CD4-positive, alpha-beta memory T cell (primary cell): ENCODE measurements at regions of chr16 and their contacts with region 1.

Region 1: GRCh38 chr16:66608241-66609138 is 4.0 kb downstream of the CMTM3 start:
- DNase-seq: peak; percentile 76 to 80 (median 76)
- H3K4me3 ChIP-seq: no peak overlapping the region
- H3K4me3 Mint-ChIP-seq: peak overlapping the region in 5 of 8 donors; percentile 36 to 77 (median 36)
- H3K27ac ChIP-seq: peak overlapping the region; percentile 48
- H3K27ac Mint-ChIP-seq: peak overlapping the region; percentile 10 to 83 (median 61)
- H3K4me1 ChIP-seq: peaks cover 42% of the 10 kb centered on the region
- H3K4me1 Mint-ChIP-seq: peaks cover 14 to 41% (median 29%) of the 10 kb centered on the region in 4 donors
- H3K27me3 ChIP-seq: no peaks in the 10 kb centered on the region
- H3K27me3 Mint-ChIP-seq: peaks cover 0 to 4% of the 10 kb centered on the region in 2 donors

Region 2: DNA sequence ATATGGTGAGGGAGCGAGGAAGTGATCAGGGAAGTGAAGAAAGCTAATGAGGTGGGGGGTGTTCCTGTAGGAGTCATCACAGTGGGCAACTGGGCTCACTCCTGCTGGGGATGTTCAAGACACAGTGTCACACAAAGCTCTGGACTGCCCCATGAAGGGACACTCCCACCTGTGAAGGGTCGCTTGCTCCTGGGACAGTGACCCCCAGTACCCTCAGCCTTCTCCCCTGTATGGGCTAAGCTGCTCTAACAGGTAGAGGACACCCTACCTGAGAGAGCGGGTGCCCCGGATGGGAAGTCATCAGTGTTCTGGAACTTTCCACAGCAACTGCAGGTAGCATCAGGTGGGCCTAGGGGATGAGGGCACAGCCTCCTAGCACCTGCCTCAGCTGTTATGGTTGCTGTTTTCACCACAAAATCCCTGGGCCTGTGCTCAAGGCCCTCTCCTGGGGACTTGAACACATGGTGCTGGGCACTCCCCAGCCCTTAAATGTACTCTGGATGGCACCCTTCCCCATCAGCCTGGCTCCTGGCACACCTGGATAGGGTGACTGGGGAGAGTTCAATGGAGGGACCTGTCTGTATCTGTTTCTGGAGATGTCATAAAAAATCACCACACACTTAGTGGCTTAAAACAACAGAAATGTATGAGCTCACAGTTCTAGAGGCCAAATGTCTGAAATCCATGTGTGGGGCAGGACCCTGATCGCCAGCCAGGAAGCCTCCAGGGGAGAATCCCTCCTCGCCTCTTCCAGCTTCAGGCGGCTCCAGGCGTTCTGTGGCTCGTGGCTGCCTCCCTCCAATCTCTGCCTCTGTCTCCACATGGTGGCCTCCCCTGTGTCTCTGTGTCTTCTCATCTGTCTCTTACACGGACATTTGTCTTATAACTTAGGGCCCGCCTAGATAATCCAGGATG is 346.0 kb before region 1 on chr16:
- CTCF ChIA-PET with region 1: no interaction called
- POLR2A ChIA-PET with region 1: no interaction called
- intact Hi-C with region 1: no loop called
- DNase-seq: no peak
- H3K4me3 ChIP-seq: no peak overlapping the region
- H3K4me3 Mint-ChIP-seq: no peak overlapping the region
- H3K27ac ChIP-seq: no peak overlapping the region
- H3K27ac Mint-ChIP-seq: peak overlapping the region in 1 of 7 donors; percentile 20
- H3K4me1 ChIP-seq: no peaks in the 10 kb centered on the region
- H3K4me1 Mint-ChIP-seq: peaks cover 0 to 9% (median 7%) of the 10 kb centered on the region in 4 donors
- H3K27me3 ChIP-seq: no peaks in the 10 kb centered on the region
- H3K27me3 Mint-ChIP-seq: peaks cover 26 to 29% of the 10 kb centered on the region in 2 donors

Region 3: GRCh38 chr16:66511615-66512500 is 96.6 kb before region 1 on chr16:
- CTCF ChIA-PET with region 1: interaction called, 13 read pairs
- POLR2A ChIA-PET with region 1: interaction called, 13 read pairs
- intact Hi-C with region 1: loop called (anchors 2 kb)
- DNase-seq: no peak
- H3K4me3 ChIP-seq: no peak overlapping the region
- H3K4me3 Mint-ChIP-seq: peak overlapping the region in 1 of 8 donors; percentile 50
- H3K27ac ChIP-seq: no peak overlapping the region
- H3K27ac Mint-ChIP-seq: peak overlapping the region in 5 of 7 donors; percentile 13 to 79 (median 30)
- H3K4me1 ChIP-seq: peaks cover 39% of the 10 kb centered on the region
- H3K4me1 Mint-ChIP-seq: peaks cover 23 to 51% (median 32%) of the 10 kb centered on the region in 4 donors
- H3K27me3 ChIP-seq: no peaks in the 10 kb centered on the region
- H3K27me3 Mint-ChIP-seq: no peaks in the 10 kb centered on the region

Region 4: DNA sequence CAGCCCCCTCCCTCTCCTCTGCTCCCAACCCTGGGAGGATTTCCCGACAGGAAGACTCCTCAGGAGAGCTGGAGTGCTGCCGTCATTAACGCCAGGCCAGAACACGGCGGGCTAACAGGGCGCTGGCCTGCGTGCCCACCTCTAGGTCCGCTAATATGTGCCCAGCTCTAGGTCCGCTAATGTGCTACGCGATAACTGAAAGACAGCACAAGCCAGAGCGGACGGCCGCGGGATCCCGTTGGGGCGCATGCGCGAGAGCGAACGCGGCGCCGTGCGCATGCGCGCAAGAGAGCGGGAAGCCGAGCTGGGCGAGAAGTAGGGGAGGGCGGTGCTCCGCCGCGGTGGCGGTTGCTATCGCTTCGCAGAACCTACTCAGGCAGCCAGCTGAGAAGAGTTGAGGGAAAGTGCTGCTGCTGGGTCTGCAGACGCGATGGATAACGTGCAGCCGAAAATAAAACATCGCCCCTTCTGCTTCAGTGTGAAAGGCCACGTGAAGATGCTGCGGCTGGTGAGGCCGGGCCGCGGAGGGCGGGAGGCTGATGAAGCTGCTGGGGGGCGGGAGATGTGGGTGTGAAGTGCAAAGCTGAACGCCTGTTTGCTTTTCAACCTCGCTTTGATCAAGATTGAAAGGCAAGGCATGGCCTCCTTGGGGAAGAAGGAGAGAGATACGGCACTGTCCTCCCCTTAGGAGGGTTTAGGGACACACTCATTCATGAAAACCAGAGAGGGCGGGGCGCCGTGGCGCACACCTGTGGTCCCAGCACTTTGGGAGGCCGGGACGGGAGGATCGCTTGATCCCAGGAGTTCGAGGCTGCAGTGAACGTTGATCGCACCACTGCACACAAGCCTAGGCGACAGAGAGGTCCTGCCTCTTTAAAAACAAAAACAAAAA is 56.0 kb before region 1 on chr16 and contains the start of gene CKLF:
- CTCF ChIA-PET with region 1: interaction called, 14 read pairs
- POLR2A ChIA-PET with region 1: interaction called, 101 read pairs
- intact Hi-C with region 1: loop called (anchors 2 kb)
- DNase-seq: peak; percentile 89 to 94 (median 92)
- H3K4me3 ChIP-seq: peak within 1 kb of the TSS; percentile 19 to 76
- H3K4me3 Mint-ChIP-seq: peak within 1 kb of the TSS; percentile 94 to 99 (median 97)
- H3K27ac ChIP-seq: peak within 1 kb of the TSS; percentile 72
- H3K27ac Mint-ChIP-seq: peak within 1 kb of the TSS; percentile 94 to 98 (median 96)
- H3K4me1 ChIP-seq: peaks cover 89% of the 10 kb centered on the region
- H3K4me1 Mint-ChIP-seq: peaks cover 63 to 88% (median 74%) of the 10 kb centered on the region in 4 donors
- H3K27me3 ChIP-seq: no peaks in the 10 kb centered on the region
- H3K27me3 Mint-ChIP-seq: no peaks in the 10 kb centered on the region
- total RNA-seq, gene CKLF: 71.0 to 76.6 TPM

Region 5: GRCh38 chr16:66588981-66589713 is 19.3 kb before region 1 on chr16:
- CTCF ChIA-PET with region 1: interaction called, 35 read pairs
- POLR2A ChIA-PET with region 1: interaction called, 39 read pairs
- intact Hi-C with region 1: loop called (anchors 1 kb)
- DNase-seq: peak; percentile 64 to 74 (median 70)
- H3K4me3 ChIP-seq: no peak overlapping the region
- H3K4me3 Mint-ChIP-seq: peak overlapping the region; percentile 80 to 94 (median 87)
- H3K27ac ChIP-seq: no peak overlapping the region
- H3K27ac Mint-ChIP-seq: peak overlapping the region; percentile 48 to 96 (median 77)
- H3K4me1 ChIP-seq: peaks cover 20% of the 10 kb centered on the region
- H3K4me1 Mint-ChIP-seq: peaks cover 13 to 23% (median 19%) of the 10 kb centered on the region in 4 donors
- H3K27me3 ChIP-seq: no peaks in the 10 kb centered on the region
- H3K27me3 Mint-ChIP-seq: no peaks in the 10 kb centered on the region

Region 6: DNA sequence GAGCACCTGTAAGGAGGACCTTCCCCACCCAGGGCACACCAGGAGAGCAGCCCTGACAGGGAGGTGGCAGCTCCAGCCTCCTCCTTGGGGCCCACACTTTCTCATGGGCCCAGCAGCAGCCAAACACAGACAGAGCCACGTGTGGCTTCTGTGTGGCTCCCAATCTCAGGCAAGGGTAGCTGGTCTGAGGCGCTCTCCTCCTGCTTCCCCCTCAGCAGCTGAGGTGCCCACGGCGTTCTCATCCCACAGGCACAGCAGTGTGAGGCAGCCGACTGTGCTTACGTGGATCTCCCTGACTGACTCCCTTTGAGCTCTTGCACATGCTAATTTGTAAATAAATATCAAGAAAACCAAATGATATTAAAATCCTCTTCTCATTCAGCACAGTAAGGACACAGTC is 26.9 kb after region 1 on chr16:
- CTCF ChIA-PET with region 1: no interaction called
- POLR2A ChIA-PET with region 1: no interaction called
- intact Hi-C with region 1: no loop called
- DNase-seq: no peak
- H3K4me3 ChIP-seq: no peak overlapping the region
- H3K4me3 Mint-ChIP-seq: no peak overlapping the region
- H3K27ac ChIP-seq: no peak overlapping the region
- H3K27ac Mint-ChIP-seq: no peak overlapping the region
- H3K4me1 ChIP-seq: no peaks in the 10 kb centered on the region
- H3K4me1 Mint-ChIP-seq: no peaks in the 10 kb centered on the region
- H3K27me3 ChIP-seq: no peaks in the 10 kb centered on the region
- H3K27me3 Mint-ChIP-seq: peaks cover 0 to 3% of the 10 kb centered on the region in 2 donors

Region 7: GRCh38 chr16:66650707-66651473 is 42.4 kb after region 1 on chr16:
- CTCF ChIA-PET with region 1: interaction called, 12 read pairs
- POLR2A ChIA-PET with region 1: interaction called, 4 read pairs
- intact Hi-C with region 1: loop called (anchors 1 kb)
- DNase-seq: peak; percentile 75 to 84 (median 80)
- H3K4me3 ChIP-seq: peak overlapping the region in 1 of 2 donors; percentile 25
- H3K4me3 Mint-ChIP-seq: peak overlapping the region; percentile 50 to 90 (median 74)
- H3K27ac ChIP-seq: no peak overlapping the region
- H3K27ac Mint-ChIP-seq: peak overlapping the region in 6 of 7 donors; percentile 2 to 90 (median 60)
- H3K4me1 ChIP-seq: peaks cover 6% of the 10 kb centered on the region
- H3K4me1 Mint-ChIP-seq: peaks cover 6 to 11% (median 10%) of the 10 kb centered on the region in 4 donors
- H3K27me3 ChIP-seq: no peaks in the 10 kb centered on the region
- H3K27me3 Mint-ChIP-seq: peaks cover 0 to 6% of the 10 kb centered on the region in 2 donors

Region 8: GRCh38 chr16:66830422-66831404 is 222.2 kb after region 1 on chr16 and contains the start of gene NAE1:
- CTCF ChIA-PET with region 1: interaction called, 7 read pairs
- POLR2A ChIA-PET with region 1: interaction called, 3 read pairs
- intact Hi-C with region 1: loop called (anchors 1 kb)
- DNase-seq: peak; percentile 81 to 94 (median 91)
- H3K4me3 ChIP-seq: peak within 1 kb of the TSS; percentile 25 to 64
- H3K4me3 Mint-ChIP-seq: peak within 1 kb of the TSS; percentile 76 to 84 (median 82)
- H3K27ac ChIP-seq: peak within 1 kb of the TSS; percentile 68
- H3K27ac Mint-ChIP-seq: peak within 1 kb of the TSS; percentile 38 to 82 (median 68)
- H3K4me1 ChIP-seq: peaks cover 39% of the 10 kb centered on the region
- H3K4me1 Mint-ChIP-seq: peaks cover 20 to 34% (median 26%) of the 10 kb centered on the region in 4 donors
- H3K27me3 ChIP-seq: no peaks in the 10 kb centered on the region
- H3K27me3 Mint-ChIP-seq: peaks cover under 1 to 2% of the 10 kb centered on the region in 2 donors
- total RNA-seq, gene NAE1: 93.8 to 95.3 TPM